ENCODE measurements at regions of chr12 and their contacts with region 1.

Region 1: DNA sequence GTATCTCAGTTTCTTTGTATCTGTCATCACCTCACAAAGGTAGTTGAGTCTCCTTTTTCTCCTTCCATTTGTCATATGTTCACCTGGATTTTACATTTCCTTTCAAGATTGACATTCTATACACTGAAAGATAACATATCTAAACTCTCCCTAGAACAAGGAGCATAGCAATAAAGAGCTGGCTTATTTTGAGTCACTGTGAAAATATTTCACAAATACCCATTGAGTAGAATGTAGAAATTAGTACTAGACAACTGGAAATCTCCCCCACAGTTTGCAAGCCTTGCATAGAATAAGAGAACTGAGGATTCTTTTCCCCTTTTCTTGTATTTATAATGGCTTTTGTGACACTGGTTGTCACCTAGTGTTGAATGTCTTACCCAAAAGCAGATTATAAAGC is 111.2 kb downstream of the KICS2 start:
- DNase-seq: no peak
- H3K4me3 ChIP-seq: no peak overlapping the region
- H3K27ac ChIP-seq: no peak overlapping the region
- H3K4me1 ChIP-seq: no peaks in the 10 kb centered on the region
- H3K27me3 ChIP-seq: no peaks in the 10 kb centered on the region
- CTCF ChIP-seq: no peak

Region 2: DNA sequence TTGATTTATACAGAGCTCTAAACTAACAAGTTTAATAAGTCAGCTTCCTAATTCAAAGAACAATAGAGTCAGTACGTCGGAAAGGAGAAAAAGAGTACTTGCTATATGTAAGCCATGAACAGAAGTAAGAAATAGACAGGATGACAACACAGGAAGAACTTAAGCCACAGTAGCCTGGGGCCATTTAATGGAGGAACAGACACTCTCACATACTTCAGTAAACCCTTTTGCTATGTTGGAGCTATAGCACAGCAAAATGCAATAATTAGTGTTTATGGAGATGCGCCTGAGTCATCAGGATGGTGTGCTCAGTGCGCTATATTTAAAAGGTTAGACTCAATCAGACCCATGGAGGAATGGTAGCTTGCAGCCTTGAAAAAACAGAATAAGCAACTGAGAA is 205.3 kb before region 1 on chr12:
- CTCF ChIA-PET with region 1: no interaction called
- POLR2A ChIA-PET with region 1: no interaction called
- intact Hi-C with region 1: no loop called
- DNase-seq: peak in 1 of 2 experiments; percentile 50
- H3K4me3 ChIP-seq: no peak overlapping the region
- H3K27ac ChIP-seq: peak overlapping the region; percentile 42
- H3K4me1 ChIP-seq: peaks cover 43% of the 10 kb centered on the region
- H3K27me3 ChIP-seq: no peaks in the 10 kb centered on the region
- CTCF ChIP-seq: no peak

Region 3: DNA sequence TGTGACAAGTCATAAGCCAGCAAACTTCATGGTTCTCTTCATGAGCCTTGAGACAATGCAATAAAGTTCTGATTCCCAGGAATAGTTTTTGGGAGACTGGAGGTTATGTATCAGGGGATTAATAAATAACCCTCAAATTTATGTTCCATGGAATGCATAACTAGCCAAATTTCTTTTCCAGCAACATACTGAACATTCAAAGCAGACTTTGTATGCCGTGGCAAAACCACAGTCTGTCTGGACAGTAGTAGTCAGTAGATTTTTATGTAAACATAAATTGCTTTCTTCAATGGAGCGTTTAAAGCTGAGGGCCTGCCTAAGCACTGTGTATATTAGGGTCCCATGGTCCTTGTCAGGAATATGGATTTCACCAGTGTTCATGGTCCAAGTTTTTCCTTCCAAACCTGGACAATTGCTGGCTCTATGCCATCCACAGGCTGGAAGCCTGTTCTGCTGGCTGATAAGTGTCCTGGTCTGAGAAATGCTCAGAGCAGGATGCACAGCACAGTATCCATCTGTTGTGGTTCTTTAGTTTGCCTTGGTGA is 121.5 kb before region 1 on chr12:
- CTCF ChIA-PET with region 1: no interaction called
- POLR2A ChIA-PET with region 1: interaction called, 34 read pairs
- intact Hi-C with region 1: no loop called
- DNase-seq: no peak
- H3K4me3 ChIP-seq: no peak overlapping the region
- H3K27ac ChIP-seq: no peak overlapping the region
- H3K4me1 ChIP-seq: no peaks in the 10 kb centered on the region
- H3K27me3 ChIP-seq: no peaks in the 10 kb centered on the region
- CTCF ChIP-seq: no peak

Region 4: GRCh38 chr12:64042911-64043310 is 68.0 kb before region 1 on chr12:
- CTCF ChIA-PET with region 1: no interaction called
- POLR2A ChIA-PET with region 1: no interaction called
- intact Hi-C with region 1: no loop called
- DNase-seq: no peak
- H3K4me3 ChIP-seq: no peak overlapping the region
- H3K27ac ChIP-seq: 0 out of 2 replicates have a peak overlapping the region, but pooled peaks have one; percentile 3
- H3K4me1 ChIP-seq: no peaks in the 10 kb centered on the region
- H3K27me3 ChIP-seq: no peaks in the 10 kb centered on the region
- CTCF ChIP-seq: no peak

Region 5: DNA sequence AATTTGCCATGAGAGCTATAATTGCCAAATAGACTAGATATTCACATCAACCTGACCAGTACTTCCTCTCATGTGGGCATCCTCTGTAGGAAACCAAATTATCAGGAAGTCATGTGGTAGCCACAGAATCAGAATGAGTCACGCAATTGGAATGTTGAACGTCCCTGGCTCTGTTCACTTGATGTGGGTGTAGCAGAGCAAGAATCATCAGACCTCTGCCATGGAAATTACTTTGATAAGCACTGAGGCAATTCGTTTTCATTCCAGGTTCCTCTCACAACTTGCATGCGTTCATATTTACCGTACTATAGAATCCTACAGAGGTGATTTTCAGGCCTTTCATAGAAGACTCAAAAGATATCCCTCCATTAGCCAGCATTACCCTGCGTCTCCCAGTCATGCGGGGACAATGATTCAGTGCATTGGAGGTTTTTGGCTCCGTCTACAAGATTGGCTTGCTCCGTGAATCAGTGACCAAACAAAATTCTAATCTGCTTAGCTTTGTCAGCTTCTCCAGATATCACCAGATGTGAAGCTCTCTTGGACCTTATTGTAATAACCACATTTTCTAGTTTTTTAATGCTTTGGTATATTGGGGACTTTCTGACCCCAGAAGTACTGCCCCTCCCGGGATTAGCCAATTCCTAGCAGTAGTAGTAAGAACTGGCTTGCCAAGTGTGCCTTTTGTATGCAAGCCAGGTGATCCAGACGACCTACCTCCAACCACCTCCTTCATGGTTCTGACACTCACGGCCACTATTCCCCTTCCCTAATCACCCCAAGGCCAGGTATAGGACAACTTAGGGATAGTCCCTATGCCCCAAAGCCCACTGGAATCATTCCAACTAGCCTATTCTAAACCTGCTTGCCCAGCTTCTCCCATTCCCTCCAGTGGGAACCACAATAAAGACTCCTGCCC is 22.2 kb before region 1 on chr12:
- CTCF ChIA-PET with region 1: no interaction called
- POLR2A ChIA-PET with region 1: no interaction called
- intact Hi-C with region 1: no loop called
- DNase-seq: peak; percentile 71 to 94
- H3K4me3 ChIP-seq: peak overlapping the region; percentile 48; the same call in 1 of the 2 replicates
- H3K27ac ChIP-seq: peak overlapping the region; percentile 89
- H3K4me1 ChIP-seq: peaks cover 40% of the 10 kb centered on the region
- H3K27me3 ChIP-seq: no peaks in the 10 kb centered on the region
- CTCF ChIP-seq: no peak

Region 6: DNA sequence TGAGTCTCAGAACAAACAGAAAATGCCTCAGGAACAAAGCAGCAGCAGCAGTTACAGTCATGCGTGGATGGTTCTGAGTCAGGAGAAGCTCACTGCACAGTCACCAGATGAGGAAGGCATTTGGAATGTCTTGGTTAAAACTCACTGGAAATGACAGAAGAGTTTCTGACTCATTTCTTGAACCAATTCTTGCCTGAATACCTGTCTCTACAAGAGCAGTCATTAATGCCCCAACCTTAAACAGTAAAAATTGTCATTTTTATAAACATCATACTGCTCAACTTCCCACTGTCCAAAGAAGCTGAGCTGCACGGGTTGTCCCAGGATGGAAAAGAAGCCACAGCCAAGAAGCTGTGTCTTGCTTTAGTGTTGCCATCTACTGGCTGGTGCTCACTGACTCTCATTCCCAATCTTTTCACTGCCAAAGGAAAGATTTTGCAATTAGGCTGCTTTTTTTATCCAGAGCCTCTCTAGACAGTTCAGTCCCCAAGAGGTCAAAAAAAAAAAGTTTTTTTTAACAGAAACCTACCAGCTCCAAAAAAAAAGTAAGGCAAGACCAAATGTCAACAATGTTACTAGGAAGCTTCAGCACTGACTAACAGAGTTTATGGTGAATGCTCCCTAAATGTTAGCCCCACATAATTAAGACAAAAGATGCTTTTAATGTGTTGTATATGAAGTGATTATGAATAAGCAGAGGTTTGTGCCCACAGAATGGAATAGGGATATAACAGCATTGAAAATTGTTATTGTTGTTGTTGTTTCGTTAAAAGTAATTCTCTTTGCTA is 70.8 kb after region 1 on chr12:
- CTCF ChIA-PET with region 1: no interaction called
- POLR2A ChIA-PET with region 1: no interaction called
- intact Hi-C with region 1: no loop called
- DNase-seq: peak; percentile 58 to 96
- H3K4me3 ChIP-seq: peak overlapping the region; percentile 3; the same call in 1 of the 2 replicates
- H3K27ac ChIP-seq: peak overlapping the region; percentile 79
- H3K4me1 ChIP-seq: peaks cover 50% of the 10 kb centered on the region
- H3K27me3 ChIP-seq: no peaks in the 10 kb centered on the region
- CTCF ChIP-seq: peak; percentile 51; the same call in 1 of the 2 replicates

Measured in PC-9 (cell line).